Panc1 (cell line): ENCODE measurements at regions of chr10 and their contacts with region 1.

Region 1: GRCh38 chr10:101889256-101890210 is 45.9 kb upstream of the KCNIP2 start:
- DNase-seq: peak; percentile 53
- ATAC-seq: peak; percentile 94
- H3K4me3 ChIP-seq: no peak overlapping the region
- H3K27ac ChIP-seq: no peak overlapping the region
- H3K4me1 ChIP-seq: no peaks in the 10 kb centered on the region; the same call in 1 of the 2 replicates
- H3K27me3 ChIP-seq: no peaks in the 10 kb centered on the region
- CTCF ChIP-seq: peak; percentile 96

Region 2: GRCh38 chr10:101901340-101901739 is 11.8 kb after region 1 on chr10:
- CTCF ChIA-PET with region 1: no interaction called
- POLR2A ChIA-PET with region 1: no interaction called
- in situ Hi-C with region 1: no loop called
- intact Hi-C with region 1: no loop called
- DNase-seq: no peak
- ATAC-seq: no peak
- H3K4me3 ChIP-seq: no peak overlapping the region
- H3K27ac ChIP-seq: no peak overlapping the region
- H3K4me1 ChIP-seq: 0 out of 2 replicates have a peak, but pooled peaks cover 5% of the 10 kb centered on the region
- H3K27me3 ChIP-seq: no peaks in the 10 kb centered on the region
- CTCF ChIP-seq: no peak

Region 3: DNA sequence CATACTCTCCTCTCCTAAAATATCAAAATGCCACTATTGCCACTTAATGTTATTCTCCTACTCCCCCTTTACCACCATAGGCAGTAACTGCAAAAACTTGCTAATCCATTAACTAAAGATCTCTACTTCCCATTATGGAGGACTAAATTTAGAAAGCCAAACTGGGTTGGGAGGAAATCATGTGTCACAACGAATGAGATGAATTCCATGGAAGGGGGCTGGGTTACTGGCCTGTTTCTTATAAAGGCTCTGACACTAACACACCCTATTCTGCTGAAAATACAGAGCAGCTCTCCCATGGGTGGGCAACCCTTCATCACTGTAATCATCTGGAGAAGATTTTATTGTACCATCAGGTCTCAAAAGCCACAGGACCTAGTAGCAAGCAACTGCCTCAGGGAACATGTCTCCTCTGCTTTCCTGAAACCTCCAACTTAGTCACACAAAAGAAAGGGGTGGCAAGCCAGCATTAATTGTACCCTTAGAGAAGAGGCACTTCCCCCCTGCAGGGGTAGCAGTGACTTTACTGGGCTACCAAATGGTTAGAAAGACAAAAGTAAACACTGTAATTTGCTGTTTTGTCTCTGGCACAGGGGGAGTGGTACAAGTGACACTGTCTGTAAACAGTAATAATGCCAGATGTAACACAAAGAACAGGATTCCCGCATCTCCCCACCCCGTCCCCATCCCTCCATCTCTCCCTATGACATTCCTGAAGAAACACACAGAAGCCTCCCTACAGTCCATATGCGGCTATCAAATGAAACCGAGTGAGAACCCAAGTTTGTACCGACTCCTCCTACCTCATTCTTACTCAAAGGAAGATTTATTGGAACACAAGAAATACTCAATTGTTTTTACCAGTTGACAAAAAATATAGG is 84.8 kb after region 1 on chr10:
- CTCF ChIA-PET with region 1: no interaction called
- POLR2A ChIA-PET with region 1: no interaction called
- in situ Hi-C with region 1: no loop called
- intact Hi-C with region 1: no loop called
- DNase-seq: no peak
- ATAC-seq: no peak
- H3K4me3 ChIP-seq: no peak overlapping the region
- H3K27ac ChIP-seq: no peak overlapping the region
- H3K4me1 ChIP-seq: no peaks in the 10 kb centered on the region
- H3K27me3 ChIP-seq: no peaks in the 10 kb centered on the region
- CTCF ChIP-seq: no peak

Region 4: GRCh38 chr10:102001435-102002068 is 112.0 kb after region 1 on chr10:
- CTCF ChIA-PET with region 1: interaction called, 3 read pairs
- POLR2A ChIA-PET with region 1: no interaction called
- in situ Hi-C with region 1: no loop called
- intact Hi-C with region 1: loop called (anchors 5 kb)
- DNase-seq: no peak
- ATAC-seq: no peak
- H3K4me3 ChIP-seq: no peak overlapping the region
- H3K27ac ChIP-seq: no peak overlapping the region
- H3K4me1 ChIP-seq: no peaks in the 10 kb centered on the region
- H3K27me3 ChIP-seq: no peaks in the 10 kb centered on the region
- CTCF ChIP-seq: no peak

Region 5: DNA sequence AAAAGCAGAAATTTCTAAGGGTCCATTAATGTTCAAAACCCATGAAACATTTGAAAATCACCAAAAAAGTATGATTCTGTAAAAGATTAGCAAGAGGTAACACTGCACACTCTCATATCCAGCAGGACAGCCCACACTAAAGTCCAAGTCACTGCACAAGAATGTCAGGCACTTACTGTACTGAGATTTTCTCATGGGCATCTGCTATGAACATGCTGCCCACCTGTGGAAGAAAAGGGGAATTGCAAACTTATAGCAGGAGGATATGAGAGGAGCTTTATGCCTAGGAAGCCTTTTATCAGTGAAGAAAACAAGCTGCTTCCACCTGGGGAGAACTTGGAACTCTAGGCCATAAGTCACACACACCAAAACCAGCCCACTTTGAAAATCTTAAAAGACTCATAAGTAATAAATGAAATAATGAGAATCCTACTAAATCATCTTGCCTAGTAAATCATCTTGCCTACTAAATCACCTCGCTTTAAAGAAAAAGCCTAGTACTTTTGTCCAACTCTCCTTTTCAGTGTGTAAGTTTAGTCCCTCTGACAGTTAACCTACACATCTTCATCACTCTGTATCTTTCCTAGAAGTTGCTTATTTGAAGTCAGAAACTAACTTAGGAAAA is 120.4 kb after region 1 on chr10:
- CTCF ChIA-PET with region 1: interaction called, 12 read pairs
- POLR2A ChIA-PET with region 1: no interaction called
- in situ Hi-C with region 1: no loop called
- intact Hi-C with region 1: loop called (anchors 5 kb)
- DNase-seq: peak; percentile 90
- ATAC-seq: peak; percentile 98
- H3K4me3 ChIP-seq: no peak overlapping the region
- H3K27ac ChIP-seq: no peak overlapping the region
- H3K4me1 ChIP-seq: peaks cover 10% of the 10 kb centered on the region
- H3K27me3 ChIP-seq: no peaks in the 10 kb centered on the region
- CTCF ChIP-seq: peak; percentile 98